GM12878 (cell line): ENCODE measurements at regions of chr2 and their contacts with region 1.

Region 1: GRCh38 chr2:80499095-80499494 is 194.5 kb upstream of the LRRTM1 start:
- DNase-seq: no peak
- ATAC-seq: peak; percentile 77
- H3K4me3 ChIP-seq: no peak overlapping the region
- H3K27ac ChIP-seq: no peak overlapping the region
- H3K4me1 ChIP-seq: no peaks in the 10 kb centered on the region
- H3K27me3 ChIP-seq: no peaks in the 10 kb centered on the region
- CTCF ChIP-seq: peak; percentile 55 to 79 (median 67)
- EP300 ChIP-seq: no peak
- POLR2A ChIP-seq: no peak
- RAD21 ChIP-seq: peak; percentile 80

Region 2: DNA sequence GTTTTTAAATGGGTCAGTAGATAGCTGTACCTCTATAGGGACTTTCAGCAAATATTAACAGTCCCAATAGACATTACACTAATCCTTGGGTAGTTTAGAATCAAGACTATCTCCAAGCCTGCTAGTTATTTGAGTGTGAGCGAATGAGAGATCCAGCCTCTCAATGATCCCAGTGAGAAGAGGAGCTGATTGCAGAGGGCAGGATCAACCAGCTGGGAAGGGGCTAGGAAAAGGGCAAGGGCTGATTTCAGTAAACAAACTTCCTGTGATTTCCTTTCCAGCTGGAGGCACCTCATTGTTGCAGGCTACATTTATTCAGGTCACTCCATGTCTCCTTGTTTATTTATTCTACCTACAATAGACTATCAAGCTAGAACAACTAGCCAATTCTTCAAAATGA is 1070.3 kb before region 1 on chr2:
- CTCF ChIA-PET with region 1: no interaction called
- POLR2A ChIA-PET with region 1: no interaction called
- RAD21 ChIA-PET with region 1: no interaction called
- SMC1A ChIA-PET with region 1: no interaction called
- in situ Hi-C with region 1: no loop called
- intact Hi-C with region 1: no loop called
- DNase-seq: no peak
- ATAC-seq: no peak
- H3K4me3 ChIP-seq: no peak overlapping the region
- H3K27ac ChIP-seq: no peak overlapping the region
- H3K4me1 ChIP-seq: no peaks in the 10 kb centered on the region
- H3K27me3 ChIP-seq: no peaks in the 10 kb centered on the region
- CTCF ChIP-seq: no peak
- EP300 ChIP-seq: no peak
- POLR2A ChIP-seq: no peak
- RAD21 ChIP-seq: no peak

Region 3: DNA sequence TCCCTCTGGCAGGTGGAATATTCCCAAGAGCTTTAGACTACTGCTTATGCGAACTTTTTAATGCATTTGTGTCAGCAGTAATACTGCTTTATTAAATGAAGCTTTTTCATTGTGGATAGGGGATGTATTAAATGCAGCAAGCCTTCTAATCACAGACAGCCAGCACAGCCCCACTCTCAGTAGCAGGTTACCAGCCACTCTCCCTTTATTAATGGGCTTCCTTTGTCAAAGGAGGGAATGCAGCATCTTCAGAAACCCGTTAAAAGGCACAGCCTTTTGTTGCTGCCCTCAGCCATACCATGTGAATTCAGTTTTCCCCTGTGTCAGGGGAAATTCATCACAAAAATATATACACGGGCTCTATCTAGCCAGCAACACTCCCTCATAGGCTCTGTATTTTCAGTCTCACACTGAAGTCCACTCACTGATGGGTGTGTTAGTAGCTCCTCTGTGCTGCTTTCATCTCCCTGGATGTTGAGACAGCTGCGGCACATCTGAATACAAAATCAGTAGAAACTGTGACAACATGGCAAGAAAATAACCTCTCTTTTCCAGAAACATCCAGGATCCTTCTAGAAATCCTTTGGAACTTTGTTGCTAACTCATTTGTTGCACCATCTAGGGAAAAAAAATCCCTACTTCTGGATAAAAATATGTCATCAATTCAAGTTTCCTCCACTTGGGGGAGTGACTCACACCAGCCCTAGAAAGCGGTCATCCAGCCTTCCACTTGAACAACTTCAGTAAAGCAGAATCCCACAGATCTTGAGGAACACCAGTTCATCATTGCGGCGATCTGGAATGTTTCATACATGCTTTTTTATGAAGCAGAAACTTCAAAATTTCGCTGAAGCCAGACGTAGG is 242.9 kb before region 1 on chr2:
- CTCF ChIA-PET with region 1: interaction called, 4 read pairs
- POLR2A ChIA-PET with region 1: no interaction called
- RAD21 ChIA-PET with region 1: interaction called, 17 read pairs
- SMC1A ChIA-PET with region 1: interaction called, 6 read pairs
- in situ Hi-C with region 1: no loop called
- intact Hi-C with region 1: loop called (anchors 10 kb)
- DNase-seq: no peak
- ATAC-seq: peak; percentile 41; the same call in 1 of the 3 replicates
- H3K4me3 ChIP-seq: no peak overlapping the region
- H3K27ac ChIP-seq: no peak overlapping the region
- H3K4me1 ChIP-seq: no peaks in the 10 kb centered on the region
- H3K27me3 ChIP-seq: peaks cover 0 to 1% of the 10 kb centered on the region in 2 experiments; a peak in 2 of 4 replicates
- CTCF ChIP-seq: peak; percentile 21 to 28 (median 24); a peak in 3 of 6 replicates
- EP300 ChIP-seq: no peak
- POLR2A ChIP-seq: no peak
- RAD21 ChIP-seq: no peak

Region 4: DNA sequence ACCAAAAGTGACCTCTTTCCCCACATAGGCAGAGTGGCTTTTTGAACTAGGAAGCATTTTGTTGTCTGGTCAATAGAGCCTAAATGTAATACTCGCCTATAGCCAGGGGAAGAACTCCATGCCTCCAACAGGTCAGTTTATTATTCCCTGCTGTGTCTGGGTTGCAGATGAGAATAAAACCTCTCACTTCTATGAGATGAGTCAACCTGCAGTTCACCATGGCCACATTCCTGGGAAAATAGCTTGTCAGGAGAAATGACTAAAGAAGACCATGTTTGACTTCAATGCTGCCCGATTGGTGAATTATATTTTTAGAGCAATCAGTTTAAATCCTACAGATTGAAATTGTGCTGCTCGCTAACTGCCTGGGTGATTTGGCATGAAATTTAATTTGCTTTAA is 147.9 kb before region 1 on chr2:
- CTCF ChIA-PET with region 1: interaction called, 8 read pairs
- POLR2A ChIA-PET with region 1: interaction called, 5 read pairs
- RAD21 ChIA-PET with region 1: interaction called, 6 read pairs
- SMC1A ChIA-PET with region 1: interaction called, 12 read pairs
- in situ Hi-C with region 1: no loop called
- intact Hi-C with region 1: no loop called
- DNase-seq: no peak
- ATAC-seq: no peak; the same call in 1 of the 3 replicates
- H3K4me3 ChIP-seq: no peak overlapping the region
- H3K27ac ChIP-seq: no peak overlapping the region
- H3K4me1 ChIP-seq: no peaks in the 10 kb centered on the region
- H3K27me3 ChIP-seq: no peaks in the 10 kb centered on the region
- CTCF ChIP-seq: no peak
- EP300 ChIP-seq: no peak
- POLR2A ChIP-seq: no peak
- RAD21 ChIP-seq: no peak

Region 5: GRCh38 chr2:80454628-80455027 is 44.5 kb before region 1 on chr2:
- CTCF ChIA-PET with region 1: interaction called, 228 read pairs
- POLR2A ChIA-PET with region 1: interaction called, 319 read pairs
- RAD21 ChIA-PET with region 1: interaction called, 556 read pairs
- SMC1A ChIA-PET with region 1: interaction called, 559 read pairs
- in situ Hi-C with region 1: no loop called
- intact Hi-C with region 1: no loop called
- DNase-seq: no peak
- ATAC-seq: peak; percentile 41
- H3K4me3 ChIP-seq: no peak overlapping the region
- H3K27ac ChIP-seq: no peak overlapping the region
- H3K4me1 ChIP-seq: 0 out of 2 replicates have a peak, but pooled peaks cover 1% of the 10 kb centered on the region
- H3K27me3 ChIP-seq: no peaks in the 10 kb centered on the region; a peak in 1 of 4 replicates
- CTCF ChIP-seq: no peak
- EP300 ChIP-seq: no peak
- POLR2A ChIP-seq: no peak
- RAD21 ChIP-seq: no peak

Region 6: GRCh38 chr2:80482276-80482675 is 16.8 kb before region 1 on chr2:
- CTCF ChIA-PET with region 1: interaction called, 50 read pairs
- POLR2A ChIA-PET with region 1: interaction called, 319 read pairs
- RAD21 ChIA-PET with region 1: interaction called, 83 read pairs
- SMC1A ChIA-PET with region 1: interaction called, 559 read pairs
- in situ Hi-C with region 1: no loop called
- intact Hi-C with region 1: no loop called
- DNase-seq: no peak
- ATAC-seq: peak; percentile 29
- H3K4me3 ChIP-seq: no peak overlapping the region
- H3K27ac ChIP-seq: no peak overlapping the region; the same call in 1 of the 2 replicates
- H3K4me1 ChIP-seq: 0 out of 2 replicates have a peak, but pooled peaks cover 4% of the 10 kb centered on the region
- H3K27me3 ChIP-seq: no peaks in the 10 kb centered on the region
- CTCF ChIP-seq: no peak
- EP300 ChIP-seq: no peak
- POLR2A ChIP-seq: no peak
- RAD21 ChIP-seq: no peak

Region 7: GRCh38 chr2:80530442-80531064 is 31.5 kb after region 1 on chr2:
- CTCF ChIA-PET with region 1: interaction called, 243 read pairs
- POLR2A ChIA-PET with region 1: interaction called, 36 read pairs
- RAD21 ChIA-PET with region 1: interaction called, 276 read pairs
- SMC1A ChIA-PET with region 1: interaction called, 360 read pairs
- in situ Hi-C with region 1: no loop called
- intact Hi-C with region 1: no loop called
- DNase-seq: peak; percentile 82
- ATAC-seq: peak; percentile 76
- H3K4me3 ChIP-seq: no peak overlapping the region
- H3K27ac ChIP-seq: peak overlapping the region; percentile 92
- H3K4me1 ChIP-seq: peaks cover 40% of the 10 kb centered on the region
- H3K27me3 ChIP-seq: no peaks in the 10 kb centered on the region
- CTCF ChIP-seq: no peak
- EP300 ChIP-seq: peak; percentile 86 to 96
- POLR2A ChIP-seq: no peak
- RAD21 ChIP-seq: no peak

Region 8: DNA sequence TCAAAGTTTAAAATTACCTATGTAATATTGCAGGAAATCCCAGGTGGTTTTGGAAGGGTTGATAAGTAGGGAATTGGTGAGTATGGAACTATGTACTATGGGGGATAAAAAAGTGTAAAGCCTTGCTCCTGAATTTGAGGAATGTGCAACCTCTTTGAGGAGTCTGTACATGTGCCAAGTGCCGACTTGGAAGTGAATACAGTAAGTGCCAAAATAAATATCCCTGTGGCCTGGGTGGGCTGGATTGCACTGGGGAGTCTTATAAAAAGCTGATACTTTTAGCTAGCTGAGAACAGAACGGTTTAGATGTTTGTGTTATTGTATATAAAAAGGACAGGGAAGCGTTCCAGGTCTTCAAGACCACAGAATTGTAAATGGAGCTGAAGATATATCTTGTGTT is 122.6 kb after region 1 on chr2:
- CTCF ChIA-PET with region 1: no interaction called
- POLR2A ChIA-PET with region 1: no interaction called
- RAD21 ChIA-PET with region 1: no interaction called
- SMC1A ChIA-PET with region 1: no interaction called
- in situ Hi-C with region 1: no loop called
- intact Hi-C with region 1: no loop called
- DNase-seq: no peak
- ATAC-seq: no peak
- H3K4me3 ChIP-seq: no peak overlapping the region
- H3K27ac ChIP-seq: no peak overlapping the region
- H3K4me1 ChIP-seq: no peaks in the 10 kb centered on the region
- H3K27me3 ChIP-seq: no peaks in the 10 kb centered on the region
- CTCF ChIP-seq: no peak
- EP300 ChIP-seq: no peak
- POLR2A ChIP-seq: no peak
- RAD21 ChIP-seq: no peak

Region 9: GRCh38 chr2:80874374-80874773 is 375.3 kb after region 1 on chr2:
- CTCF ChIA-PET with region 1: no interaction called
- POLR2A ChIA-PET with region 1: no interaction called
- RAD21 ChIA-PET with region 1: no interaction called
- SMC1A ChIA-PET with region 1: no interaction called
- in situ Hi-C with region 1: no loop called
- intact Hi-C with region 1: no loop called
- DNase-seq: no peak
- ATAC-seq: no peak
- H3K4me3 ChIP-seq: no peak overlapping the region
- H3K27ac ChIP-seq: no peak overlapping the region
- H3K4me1 ChIP-seq: no peaks in the 10 kb centered on the region
- H3K27me3 ChIP-seq: no peaks in the 10 kb centered on the region
- CTCF ChIP-seq: no peak
- EP300 ChIP-seq: no peak
- POLR2A ChIP-seq: no peak
- RAD21 ChIP-seq: no peak